Activated CD8-positive, alpha-beta T cell treated with anti-CD3 and anti-CD28 coated beads for 36 hours (primary cell): ENCODE measurements at regions of chr16 and their contacts with region 1.

Region 1: DNA sequence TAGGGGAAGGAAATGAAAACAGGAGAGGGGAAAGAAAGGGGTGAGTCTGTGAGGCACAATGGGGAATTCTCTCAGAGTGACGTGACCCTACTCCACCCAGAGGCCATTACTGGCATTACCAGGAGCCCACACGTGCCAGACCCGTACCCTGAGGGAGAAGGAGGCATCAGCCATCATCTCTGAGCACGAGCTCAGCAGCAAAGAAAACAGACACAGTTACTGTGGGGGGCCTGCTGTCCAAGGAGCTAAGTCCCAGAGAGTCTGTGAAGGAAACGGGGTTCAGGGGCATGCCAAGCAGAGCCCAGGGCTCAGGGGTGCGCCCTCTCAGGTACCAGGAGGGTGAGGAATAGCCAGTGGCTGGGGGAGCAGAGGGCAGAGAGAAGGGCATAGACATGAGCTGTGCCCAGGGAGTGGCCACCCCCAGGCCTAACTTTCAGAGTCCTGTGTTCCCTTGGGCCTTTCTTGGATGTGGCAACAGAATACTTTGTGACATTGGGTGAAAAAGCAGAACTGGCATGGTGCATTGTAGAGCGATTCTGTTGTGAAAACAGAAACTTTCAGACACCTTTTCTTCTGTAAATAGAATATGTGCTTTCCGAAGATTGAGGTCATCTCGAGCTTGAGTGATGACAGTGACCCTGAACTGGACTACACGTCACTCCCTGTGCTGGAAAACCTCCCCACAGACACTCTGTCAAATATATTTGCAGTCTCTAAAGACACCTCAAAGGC is 11.3 kb downstream of the TAF1C start:
- DNase-seq: peak; percentile 83
- ATAC-seq: peak; percentile 97
- H3K4me3 Mint-ChIP-seq: no peak overlapping the region
- H3K27ac Mint-ChIP-seq: no peak overlapping the region
- H3K4me1 Mint-ChIP-seq: peaks cover 16% of the 10 kb centered on the region
- H3K27me3 Mint-ChIP-seq: no peaks in the 10 kb centered on the region
- CTCF ChIP-seq: peak; percentile 92

Region 2: GRCh38 chr16:83952940-83953795 is 222.3 kb before region 1 on chr16 and contains the start of gene OSGIN1:
- CTCF ChIA-PET with region 1: interaction called, 8 read pairs
- POLR2A ChIA-PET with region 1: no interaction called
- intact Hi-C with region 1: loop called (anchors 10 kb)
- DNase-seq: peak; percentile 94
- ATAC-seq: peak; percentile 94
- H3K4me3 Mint-ChIP-seq: no peak within 1 kb of the TSS
- H3K27ac Mint-ChIP-seq: peak within 1 kb of the TSS; percentile 11
- H3K4me1 Mint-ChIP-seq: peaks cover 8% of the 10 kb centered on the region
- H3K27me3 Mint-ChIP-seq: peaks cover 17% of the 10 kb centered on the region
- CTCF ChIP-seq: no peak
- total RNA-seq, gene OSGIN1: 0.56 to 0.67 TPM

Region 3: GRCh38 chr16:84072014-84072413 is 103.5 kb before region 1 on chr16:
- CTCF ChIA-PET with region 1: interaction called, 13 read pairs
- POLR2A ChIA-PET with region 1: no interaction called
- intact Hi-C with region 1: no loop called
- DNase-seq: no peak
- ATAC-seq: no peak
- H3K4me3 Mint-ChIP-seq: no peak overlapping the region
- H3K27ac Mint-ChIP-seq: no peak overlapping the region
- H3K4me1 Mint-ChIP-seq: no peaks in the 10 kb centered on the region
- H3K27me3 Mint-ChIP-seq: no peaks in the 10 kb centered on the region
- CTCF ChIP-seq: no peak

Region 4: DNA sequence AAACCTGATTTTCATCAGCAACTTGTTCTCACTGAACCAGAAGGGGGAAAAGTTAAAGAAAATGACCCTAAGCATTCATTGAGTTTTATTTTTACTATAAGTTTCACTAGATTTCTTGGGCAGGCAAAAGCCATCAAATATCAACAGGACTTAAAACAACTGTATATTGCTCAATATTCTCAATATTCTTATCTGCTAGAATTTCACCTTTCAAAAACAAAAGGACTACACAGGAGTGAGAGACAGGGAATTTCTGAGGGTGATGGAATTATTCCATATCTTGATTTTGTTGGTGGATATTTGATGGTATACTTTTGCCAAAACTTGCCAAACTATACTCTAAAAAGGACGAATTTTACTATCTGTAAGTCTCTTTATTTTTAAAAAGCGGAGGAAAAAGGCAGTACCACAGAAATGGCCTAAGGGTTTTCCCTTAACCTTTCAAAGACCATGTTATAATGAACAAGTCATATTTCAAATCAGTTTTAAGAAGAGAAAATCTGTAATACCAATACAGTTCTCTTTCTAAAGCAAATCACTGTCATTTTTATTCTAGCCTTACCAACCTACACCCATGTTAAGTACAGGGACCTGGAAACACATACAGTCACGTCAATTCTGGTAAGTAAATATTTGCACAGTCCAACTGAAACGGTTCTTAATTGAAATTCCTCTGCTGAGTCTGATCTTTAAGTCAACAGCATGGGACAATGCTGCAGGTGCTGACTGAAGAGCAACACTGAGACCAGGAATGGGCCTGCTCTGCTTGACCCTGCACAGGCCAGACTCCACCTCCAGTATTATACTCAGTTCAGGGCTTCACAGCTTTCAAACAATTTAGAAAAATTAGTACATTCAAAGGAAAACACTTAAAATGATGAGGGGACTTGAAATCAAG is 79.2 kb before region 1 on chr16:
- CTCF ChIA-PET with region 1: interaction called, 14 read pairs
- POLR2A ChIA-PET with region 1: interaction called, 5 read pairs
- intact Hi-C with region 1: no loop called
- DNase-seq: no peak
- ATAC-seq: no peak
- H3K4me3 Mint-ChIP-seq: no peak overlapping the region
- H3K27ac Mint-ChIP-seq: no peak overlapping the region
- H3K4me1 Mint-ChIP-seq: peaks cover 14% of the 10 kb centered on the region
- H3K27me3 Mint-ChIP-seq: no peaks in the 10 kb centered on the region
- CTCF ChIP-seq: no peak

Region 5: GRCh38 chr16:84116720-84117493 is 58.6 kb before region 1 on chr16 and contains the start of gene MBTPS1:
- CTCF ChIA-PET with region 1: interaction called, 33 read pairs
- POLR2A ChIA-PET with region 1: interaction called, 3 read pairs
- intact Hi-C with region 1: no loop called
- DNase-seq: peak; percentile 98
- ATAC-seq: peak; percentile 92
- H3K4me3 Mint-ChIP-seq: peak within 1 kb of the TSS; percentile 94
- H3K27ac Mint-ChIP-seq: peak within 1 kb of the TSS; percentile 95
- H3K4me1 Mint-ChIP-seq: peaks cover 26% of the 10 kb centered on the region
- H3K27me3 Mint-ChIP-seq: no peaks in the 10 kb centered on the region
- CTCF ChIP-seq: peak; percentile 4
- total RNA-seq, gene MBTPS1: 31.5 to 31.7 TPM

Region 6: DNA sequence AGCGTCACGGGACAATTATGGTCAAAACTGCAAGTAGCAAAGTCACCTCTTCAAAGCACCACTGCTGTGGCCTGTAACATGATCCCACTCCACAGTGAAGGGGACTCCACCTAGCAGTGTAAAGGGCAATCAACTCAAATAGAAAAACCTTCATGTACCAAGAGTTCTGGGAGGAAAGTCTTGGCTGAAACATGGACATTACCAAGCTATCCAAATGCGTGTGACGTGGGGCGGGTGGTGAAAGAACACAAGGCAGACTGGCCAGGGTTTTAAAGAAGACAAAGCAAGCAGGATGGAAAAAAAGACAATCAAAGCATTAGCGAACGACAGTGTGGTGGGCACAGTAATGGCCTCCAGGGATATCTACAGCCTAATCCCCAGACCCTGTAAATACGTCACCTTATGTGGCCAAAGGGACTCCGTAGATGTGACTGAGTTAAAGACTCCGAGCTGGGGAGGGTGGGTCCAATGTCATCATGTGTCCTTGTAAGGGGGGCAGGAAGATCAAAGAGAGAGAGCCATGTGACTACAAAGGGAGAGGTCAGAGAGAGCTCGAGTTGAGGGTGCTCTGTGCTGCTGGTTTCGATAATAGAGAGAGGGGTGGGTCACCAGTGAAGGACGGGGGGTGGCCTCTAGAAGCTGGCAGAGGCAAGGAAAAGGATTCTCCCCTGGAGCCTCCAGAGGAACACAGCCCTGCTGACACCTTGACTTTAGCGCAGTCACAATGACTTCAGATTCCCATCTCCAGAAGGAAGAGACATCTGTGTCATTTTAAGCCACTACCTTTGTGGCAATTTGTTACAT is 36.5 kb before region 1 on chr16:
- CTCF ChIA-PET with region 1: interaction called, 16 read pairs
- POLR2A ChIA-PET with region 1: no interaction called
- intact Hi-C with region 1: no loop called
- DNase-seq: peak; percentile 78
- ATAC-seq: peak; percentile 96
- H3K4me3 Mint-ChIP-seq: peak overlapping the region; percentile 4
- H3K27ac Mint-ChIP-seq: peak overlapping the region; percentile 82
- H3K4me1 Mint-ChIP-seq: peaks cover 56% of the 10 kb centered on the region
- H3K27me3 Mint-ChIP-seq: no peaks in the 10 kb centered on the region
- CTCF ChIP-seq: no peak

Region 7: GRCh38 chr16:84186685-84187437 is 11.3 kb after region 1 on chr16 and contains the start of gene TAF1C:
- CTCF ChIA-PET with region 1: interaction called, 54 read pairs
- POLR2A ChIA-PET with region 1: interaction called, 3 read pairs
- intact Hi-C with region 1: no loop called
- DNase-seq: peak; percentile 97
- ATAC-seq: peak; percentile 98
- H3K4me3 Mint-ChIP-seq: peak within 1 kb of the TSS; percentile 94
- H3K27ac Mint-ChIP-seq: peak within 1 kb of the TSS; percentile 95
- H3K4me1 Mint-ChIP-seq: peaks cover 14% of the 10 kb centered on the region
- H3K27me3 Mint-ChIP-seq: no peaks in the 10 kb centered on the region
- CTCF ChIP-seq: peak; percentile 86
- total RNA-seq, gene TAF1C: 59.3 to 62.6 TPM